ENCODE measurements at regions of chr15 and their contacts with region 1.

Region 1: DNA sequence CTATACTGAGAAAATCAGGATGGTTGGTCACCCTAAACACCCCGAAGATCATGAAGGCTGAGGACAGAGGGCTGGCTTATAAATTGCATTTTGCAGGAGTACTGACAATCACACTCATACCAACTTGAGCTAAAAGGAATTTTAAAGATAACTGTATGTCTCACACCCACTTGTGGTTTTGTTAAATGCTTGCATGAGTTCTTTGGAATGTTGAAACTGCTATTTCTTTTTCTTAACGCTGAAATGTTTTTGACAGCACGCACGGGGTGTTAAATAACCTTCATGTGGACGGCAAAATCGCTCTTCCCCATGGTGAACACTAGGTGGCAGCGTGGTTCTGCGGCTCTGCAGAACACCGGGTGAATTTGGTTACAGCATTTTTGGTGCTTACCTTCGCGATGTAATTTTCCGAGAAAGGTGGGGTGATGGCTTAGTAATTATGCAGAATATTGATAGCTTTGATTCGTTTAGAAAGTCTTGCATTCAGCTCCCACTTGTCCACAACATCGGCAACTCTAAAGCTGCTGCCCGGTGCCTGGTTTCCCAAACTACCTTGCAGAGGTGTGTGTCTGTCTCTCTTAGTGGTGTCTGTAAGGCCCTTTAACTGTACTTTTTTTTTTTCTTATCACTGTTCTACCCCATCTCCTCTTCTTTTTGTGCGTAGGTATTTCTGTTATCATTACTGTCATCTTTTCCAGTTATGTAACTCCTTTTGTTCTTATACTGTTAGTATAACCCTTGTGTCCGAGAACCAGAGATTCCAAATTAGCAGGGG is 51.7 kb downstream of the ARNT2 start:
- DNase-seq: peak; percentile 85
- ATAC-seq: peak; percentile 77
- H3K4me3 ChIP-seq: 0 out of 2 replicates have a peak overlapping the region, but pooled peaks have one; percentile 1
- H3K27ac ChIP-seq: no peak overlapping the region
- H3K4me1 ChIP-seq: peaks cover 12% of the 10 kb centered on the region
- H3K27me3 ChIP-seq: no peaks in the 10 kb centered on the region
- CTCF ChIP-seq: peak; percentile 95

Region 2: DNA sequence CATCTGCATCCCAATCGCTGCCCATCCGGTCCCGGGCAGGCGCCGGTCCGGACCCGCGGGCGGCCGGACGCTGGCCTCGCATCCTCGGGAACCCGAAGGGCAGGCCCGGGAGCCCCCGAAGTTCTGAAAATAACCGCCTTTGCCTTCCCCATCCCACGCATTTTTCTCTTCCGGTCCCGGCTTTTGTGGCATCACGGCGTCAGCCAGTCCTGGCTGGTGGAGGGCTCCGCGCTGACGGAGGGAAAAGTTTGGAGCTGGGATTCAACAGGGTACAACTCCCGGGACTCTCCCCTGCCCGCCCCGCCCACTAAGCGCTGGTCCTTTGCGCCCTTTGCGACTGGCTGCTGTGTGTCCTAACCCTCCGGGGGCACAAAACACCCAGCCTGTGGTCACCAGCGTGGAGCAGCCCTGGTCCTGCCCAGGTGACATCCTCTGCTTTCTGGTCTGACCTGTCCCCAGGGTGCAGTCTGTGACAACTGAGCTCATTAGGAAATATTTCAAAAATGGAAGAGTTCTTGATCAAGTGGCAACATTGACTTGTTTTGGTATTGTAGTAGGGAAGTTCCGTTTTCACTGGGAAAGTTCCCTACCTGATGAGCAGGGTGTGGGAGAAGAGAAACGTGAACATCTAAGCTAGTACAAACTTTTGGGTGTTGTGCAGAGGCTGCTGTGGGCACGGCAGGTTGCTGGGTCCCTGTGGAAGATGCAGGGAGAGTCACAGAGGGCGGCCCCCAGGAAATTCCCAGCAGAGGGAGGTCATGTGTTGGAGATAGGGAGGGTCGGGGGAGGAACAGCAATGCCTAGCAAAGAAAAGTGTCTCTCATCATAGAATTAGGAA is 50.9 kb before region 1 on chr15:
- CTCF ChIA-PET with region 1: no interaction called
- POLR2A ChIA-PET with region 1: no interaction called
- intact Hi-C with region 1: no loop called
- DNase-seq: no peak
- ATAC-seq: no peak
- H3K4me3 ChIP-seq: no peak overlapping the region
- H3K27ac ChIP-seq: no peak overlapping the region
- H3K4me1 ChIP-seq: no peaks in the 10 kb centered on the region
- H3K27me3 ChIP-seq: peaks cover 89% of the 10 kb centered on the region
- CTCF ChIP-seq: no peak

Region 3: GRCh38 chr15:80424381-80424780 is 31.5 kb before region 1 on chr15:
- CTCF ChIA-PET with region 1: no interaction called
- POLR2A ChIA-PET with region 1: no interaction called
- intact Hi-C with region 1: loop called (anchors 1 kb)
- DNase-seq: peak; percentile 97
- ATAC-seq: peak; percentile 99
- H3K4me3 ChIP-seq: no peak overlapping the region
- H3K27ac ChIP-seq: peak overlapping the region; percentile 76
- H3K4me1 ChIP-seq: peaks cover 20% of the 10 kb centered on the region
- H3K27me3 ChIP-seq: no peaks in the 10 kb centered on the region
- CTCF ChIP-seq: no peak

Region 4: DNA sequence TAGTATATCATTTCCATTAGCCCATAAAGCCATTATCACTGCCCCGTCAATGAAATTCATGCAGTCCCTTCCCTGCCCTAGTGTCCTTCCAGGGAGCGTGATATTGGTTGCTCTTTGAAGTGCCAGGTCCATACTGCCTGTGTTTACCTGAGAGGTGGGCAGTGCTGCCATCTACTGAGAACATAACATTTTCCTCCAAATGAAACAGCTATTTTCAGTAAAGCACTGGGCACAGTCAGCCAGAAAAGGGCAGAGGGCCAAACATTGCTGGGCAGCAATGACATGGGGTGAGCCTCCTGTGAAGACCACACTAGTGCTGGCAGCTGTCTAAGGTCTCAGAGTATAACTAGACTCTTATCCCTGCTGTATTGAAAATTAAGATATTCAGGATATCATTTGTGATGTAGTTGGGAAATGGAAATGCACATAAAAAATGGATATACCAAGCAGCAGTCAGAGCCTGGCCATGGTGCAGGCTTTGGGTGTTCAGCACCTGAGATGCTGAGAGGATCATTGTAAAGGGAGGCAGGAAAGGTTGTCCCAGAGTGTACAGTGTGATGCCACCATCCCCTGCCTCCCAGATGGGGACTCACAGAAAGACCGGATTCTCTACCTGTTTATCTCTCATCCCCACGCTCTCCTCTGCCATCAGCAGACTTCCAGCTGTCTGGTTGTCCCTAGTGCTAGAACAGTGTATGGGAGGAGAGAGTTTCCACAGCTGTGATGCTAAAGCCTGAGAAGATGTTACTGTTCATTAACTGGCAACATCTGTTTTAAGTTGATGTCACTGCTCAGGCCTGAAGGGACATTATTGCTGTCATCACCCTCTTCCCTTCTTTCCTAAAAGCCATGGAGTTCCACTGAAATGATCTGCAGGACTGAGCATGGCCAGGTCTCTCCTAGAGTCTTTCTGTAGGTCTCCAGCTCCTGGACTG is 57.1 kb after region 1 on chr15:
- CTCF ChIA-PET with region 1: no interaction called
- POLR2A ChIA-PET with region 1: no interaction called
- intact Hi-C with region 1: loop called (anchors 1 kb)
- DNase-seq: peak; percentile 50
- ATAC-seq: peak; percentile 77
- H3K4me3 ChIP-seq: no peak overlapping the region
- H3K27ac ChIP-seq: no peak overlapping the region
- H3K4me1 ChIP-seq: no peaks in the 10 kb centered on the region
- H3K27me3 ChIP-seq: no peaks in the 10 kb centered on the region
- CTCF ChIP-seq: peak; percentile 59

Region 5: GRCh38 chr15:81106560-81106959 is 650.7 kb after region 1 on chr15:
- CTCF ChIA-PET with region 1: no interaction called
- POLR2A ChIA-PET with region 1: no interaction called
- intact Hi-C with region 1: loop called (anchors 5 kb)
- DNase-seq: peak; percentile 78
- ATAC-seq: peak; percentile 71
- H3K4me3 ChIP-seq: no peak overlapping the region
- H3K27ac ChIP-seq: no peak overlapping the region
- H3K4me1 ChIP-seq: peaks cover 7% of the 10 kb centered on the region; the same call in 1 of the 2 replicates
- H3K27me3 ChIP-seq: peaks cover 11% of the 10 kb centered on the region
- CTCF ChIP-seq: peak; percentile 78

Measured in PC-3 (cell line).